Dorsolateral prefrontal cortex (tissue), 120 donors: ENCODE measurements at regions of chr2 and their contacts with region 1.

Region 1: GRCh38 chr2:240560480-240561326 is 546 bp downstream of the DUSP28 start:
- DNase-seq: peak; percentile 99 to 100 (median 99)
- H3K4me3 ChIP-seq: peak overlapping the region; percentile 67 to 99 (median 91)
- H3K27ac ChIP-seq: peak overlapping the region; percentile 85 to 100 (median 99)
- H3K27me3 ChIP-seq: no peaks in the 10 kb centered on the region
- CTCF ChIP-seq: peak in 53 of 56 donors; percentile 13 to 71 (median 51)

Region 2: DNA sequence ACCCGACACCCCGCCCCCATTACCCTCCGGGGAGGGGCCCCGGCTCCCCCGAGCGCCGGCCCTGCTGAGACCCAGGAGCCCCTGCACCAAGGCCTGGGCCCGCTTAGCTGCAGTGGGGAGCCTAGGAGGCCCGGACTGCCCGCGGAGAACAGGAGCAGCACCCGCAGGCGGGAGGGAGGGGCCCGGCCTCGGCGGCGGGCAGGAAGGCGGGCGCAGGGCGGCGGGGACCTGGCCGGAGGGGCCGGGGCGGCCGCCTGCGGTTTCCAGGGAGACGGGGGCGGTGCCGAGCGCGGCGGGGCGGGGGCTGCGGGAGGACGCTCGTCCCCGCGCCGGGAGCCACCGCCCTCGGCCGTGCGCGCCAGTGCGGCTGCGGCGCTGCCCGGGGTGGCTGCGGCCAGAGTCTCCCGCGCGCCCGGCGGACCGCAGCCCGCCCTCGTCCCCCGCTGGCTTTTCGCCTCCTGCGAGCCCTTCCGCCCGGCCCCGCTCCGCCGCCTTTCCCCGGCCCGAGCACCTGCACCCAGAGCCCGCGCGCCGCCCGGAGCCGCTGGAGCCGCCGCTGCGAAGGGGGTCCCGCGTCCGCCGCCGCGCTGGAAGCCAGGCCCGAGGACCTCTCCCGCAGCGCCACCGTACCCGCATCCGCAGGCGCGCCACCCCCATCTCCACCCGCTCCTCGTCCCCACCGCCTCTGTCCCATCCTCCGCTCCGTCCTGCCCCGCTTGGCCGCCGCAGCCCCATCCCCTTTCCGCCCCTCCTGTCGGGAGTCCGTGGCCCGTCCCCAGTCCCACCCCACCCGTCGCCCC is 108.0 kb before region 1 on chr2:
- intact Hi-C with region 1: loop called (anchors 5 to 10 kb)
- DNase-seq: peak in 7 of 10 donors; percentile 55 to 85 (median 72)
- H3K4me3 ChIP-seq: peak overlapping the region; percentile 40 to 84 (median 68)
- H3K27ac ChIP-seq: peak overlapping the region in 54 of 59 donors; percentile 7 to 93 (median 82)
- H3K27me3 ChIP-seq: no peaks in the 10 kb centered on the region
- CTCF ChIP-seq: no peak

Region 3: DNA sequence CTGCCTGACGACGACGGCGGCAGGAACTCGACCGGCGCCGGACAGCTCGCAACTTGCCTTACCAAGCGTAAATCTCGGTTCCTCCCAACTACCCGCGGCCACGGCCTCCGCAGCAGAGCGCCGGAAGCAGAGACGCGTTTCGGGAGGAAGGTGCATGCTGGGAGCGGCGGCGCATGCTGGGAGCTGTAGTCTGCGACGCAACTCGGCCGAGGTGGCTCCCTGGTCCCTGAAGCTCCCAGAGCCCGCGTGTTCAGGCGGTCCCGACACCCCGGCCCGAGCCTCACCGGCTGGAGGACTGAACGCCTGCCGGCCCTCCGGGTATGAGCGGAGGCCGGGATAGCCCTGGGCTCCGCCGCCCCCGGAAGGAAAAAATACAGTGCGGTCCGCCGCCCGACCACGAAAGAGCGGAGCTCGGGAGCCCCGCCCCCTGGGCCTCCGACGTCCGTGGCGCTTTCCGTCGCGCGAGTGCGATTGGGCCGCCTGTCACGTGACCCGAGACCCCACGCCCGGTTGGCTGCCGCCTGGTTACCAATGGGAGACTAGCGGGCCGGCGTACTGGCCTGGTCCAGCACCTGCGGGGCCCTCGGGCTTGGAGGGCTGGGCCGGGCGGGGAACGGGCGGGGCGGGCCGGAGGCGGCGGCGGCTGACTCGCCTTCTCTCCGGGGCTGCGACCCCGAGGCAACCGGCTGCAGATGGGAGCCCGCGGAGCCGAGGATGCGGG is 25.7 kb after region 1 on chr2 and contains the start of gene CAPN10:
- intact Hi-C with region 1: loop called in 1 of 2 experiments (anchors 2 kb)
- DNase-seq: peak; percentile 97 to 99 (median 98)
- H3K4me3 ChIP-seq: peak within 1 kb of the TSS; percentile 60 to 100 (median 97)
- H3K27ac ChIP-seq: peak within 1 kb of the TSS; percentile 70 to 99 (median 96)
- H3K27me3 ChIP-seq: no peaks in the 10 kb centered on the region
- CTCF ChIP-seq: peak in 34 of 56 donors; percentile 6 to 64 (median 30)
- total RNA-seq, gene CAPN10: 25.6 to 70.0 (median 40.7) TPM

Region 4: DNA sequence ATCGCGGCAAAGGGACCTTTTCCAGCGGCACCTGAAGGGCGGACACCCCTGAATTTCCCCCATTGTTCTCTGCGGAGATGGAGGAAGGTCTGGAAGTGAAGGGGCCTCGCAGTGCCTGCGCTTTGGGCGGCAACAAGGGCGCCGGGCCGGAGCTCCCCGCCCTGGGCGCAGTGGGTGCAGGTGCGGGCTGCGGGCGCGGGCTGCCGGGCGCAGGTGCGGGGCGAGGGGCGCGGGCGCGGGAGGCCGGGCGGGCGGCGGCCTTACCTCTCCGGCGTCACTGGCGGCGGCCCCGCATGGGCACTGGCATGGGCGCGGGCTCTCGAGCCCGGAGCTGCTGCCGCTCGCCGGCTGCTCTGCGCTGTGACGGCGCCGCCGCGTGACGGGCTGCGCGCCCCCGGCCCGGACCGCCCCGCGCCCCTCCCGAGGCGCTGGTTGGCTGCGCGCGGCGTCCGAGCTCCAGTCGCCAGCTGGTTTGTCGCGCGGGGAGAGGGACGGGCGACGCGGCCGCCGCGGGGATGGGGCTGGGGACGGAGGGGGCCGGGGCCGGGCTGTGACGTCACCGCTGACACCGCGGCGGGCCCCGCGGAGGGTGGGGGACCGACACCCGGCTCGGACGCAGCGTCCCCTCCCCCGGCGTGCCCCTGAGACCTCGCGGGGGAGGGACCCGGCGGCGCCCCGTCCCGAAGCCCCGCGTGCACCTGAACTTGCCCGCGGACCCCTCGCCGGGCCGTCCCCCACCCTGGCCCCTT is 259.3 kb after region 1 on chr2 and contains the start of gene KIF1A:
- intact Hi-C with region 1: loop called (anchors 5 kb)
- DNase-seq: peak; percentile 84 to 97 (median 92)
- H3K4me3 ChIP-seq: peak within 1 kb of the TSS; percentile 53 to 97 (median 86)
- H3K27ac ChIP-seq: peak within 1 kb of the TSS; percentile 40 to 97 (median 93)
- H3K27me3 ChIP-seq: peaks cover 0 to 8% (median 0%) of the 10 kb centered on the region in 45 donors
- CTCF ChIP-seq: peak in 2 of 56 donors; percentile 6 to 7
- total RNA-seq, gene KIF1A: 869 to 1,843 (median 1,153) TPM

Region 5: DNA sequence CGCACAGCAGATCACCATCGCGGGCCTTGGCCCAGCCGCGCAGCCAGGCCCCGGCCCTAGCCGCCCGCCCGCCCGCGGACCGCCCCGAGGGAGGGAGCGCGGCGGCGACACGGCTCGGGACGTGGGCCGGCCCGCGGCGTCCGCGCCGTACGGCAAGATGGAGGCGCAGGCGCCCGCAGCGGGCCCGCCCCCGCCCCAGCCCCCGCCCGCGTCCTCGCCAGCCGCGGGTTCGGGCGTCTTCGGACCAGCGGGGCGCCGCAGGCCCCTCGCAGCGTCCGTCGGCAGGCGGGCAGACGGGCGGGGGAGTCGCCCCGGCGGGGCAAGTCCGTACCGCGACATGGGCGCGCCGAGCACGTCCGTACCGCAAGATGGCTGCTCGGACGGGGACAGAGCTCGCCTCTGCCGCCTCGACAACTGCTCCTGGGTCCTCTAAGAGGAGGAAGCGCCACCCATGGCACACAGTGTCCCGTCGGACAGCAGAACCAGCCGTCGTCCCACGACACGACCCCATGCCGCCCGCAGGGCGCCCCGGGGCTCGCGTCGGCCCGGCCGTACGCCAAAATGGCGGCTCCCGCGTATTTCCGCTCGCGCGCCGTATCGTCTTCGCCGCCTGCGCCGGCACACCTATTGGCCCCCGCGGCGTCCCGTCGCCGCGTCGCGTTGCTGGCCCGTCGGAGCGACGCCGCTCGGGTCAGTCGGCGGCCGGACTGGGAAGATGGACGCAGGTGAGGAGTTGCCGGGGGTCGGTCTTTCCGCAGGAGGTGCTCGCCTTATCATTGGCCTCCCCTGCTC is 1076.5 kb after region 1 on chr2 and contains the starts of genes ATG4B and THAP4:
- intact Hi-C with region 1: loop called in 1 of 2 experiments (anchors 10 kb)
- DNase-seq: peak; percentile 69 to 92 (median 81)
- H3K4me3 ChIP-seq: peak within 1 kb of the TSS; percentile 57 to 99 (median 86)
- H3K27ac ChIP-seq: peak within 1 kb of the TSS; percentile 91 to 100 (median 98)
- H3K27me3 ChIP-seq: no peaks in the 10 kb centered on the region
- CTCF ChIP-seq: peak in 24 of 56 donors; percentile 7 to 48 (median 22)
- total RNA-seq, gene ATG4B: 79.3 to 164 (median 118) TPM
- total RNA-seq, gene THAP4: 35.1 to 69.3 (median 54.0) TPM